ENCODE measurements at regions of chr11 and their contacts with region 1.

Region 1: GRCh38 chr11:21520244-21520643 is 672.6 kb upstream of the ANO5 start:
- DNase-seq: no peak
- H3K4me3 ChIP-seq: no peak overlapping the region
- H3K27ac ChIP-seq: no peak overlapping the region
- H3K4me1 ChIP-seq: no peaks in the 10 kb centered on the region
- H3K27me3 ChIP-seq: no peaks in the 10 kb centered on the region
- CTCF ChIP-seq: no peak
- EP300 ChIP-seq: no peak
- POLR2A ChIP-seq: no peak

Region 2: DNA sequence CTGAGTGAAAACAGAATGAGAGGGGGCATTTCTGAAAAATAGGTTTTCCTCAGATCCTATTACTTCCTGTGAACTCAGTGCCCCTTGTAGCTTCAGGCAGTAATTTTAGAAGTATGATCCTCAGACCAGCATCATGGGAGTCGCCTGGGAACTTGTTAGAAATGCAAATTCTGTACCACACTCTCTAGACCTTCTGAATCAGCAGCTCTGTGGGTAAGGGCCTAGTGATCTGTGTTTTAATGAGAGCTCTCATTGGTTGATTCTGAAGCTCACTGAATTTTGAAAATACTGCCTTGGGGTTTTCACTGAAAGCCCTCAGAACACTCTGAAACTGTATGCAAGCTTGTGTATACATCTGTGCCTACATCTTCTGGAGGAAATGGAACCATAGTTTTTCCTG is 25.5 kb after region 1 on chr11:
- in situ Hi-C with region 1: no loop called
- intact Hi-C with region 1: no loop called
- DNase-seq: no peak
- H3K4me3 ChIP-seq: no peak overlapping the region
- H3K27ac ChIP-seq: no peak overlapping the region
- H3K4me1 ChIP-seq: no peaks in the 10 kb centered on the region
- H3K27me3 ChIP-seq: no peaks in the 10 kb centered on the region
- CTCF ChIP-seq: no peak
- EP300 ChIP-seq: no peak
- POLR2A ChIP-seq: no peak

Region 3: DNA sequence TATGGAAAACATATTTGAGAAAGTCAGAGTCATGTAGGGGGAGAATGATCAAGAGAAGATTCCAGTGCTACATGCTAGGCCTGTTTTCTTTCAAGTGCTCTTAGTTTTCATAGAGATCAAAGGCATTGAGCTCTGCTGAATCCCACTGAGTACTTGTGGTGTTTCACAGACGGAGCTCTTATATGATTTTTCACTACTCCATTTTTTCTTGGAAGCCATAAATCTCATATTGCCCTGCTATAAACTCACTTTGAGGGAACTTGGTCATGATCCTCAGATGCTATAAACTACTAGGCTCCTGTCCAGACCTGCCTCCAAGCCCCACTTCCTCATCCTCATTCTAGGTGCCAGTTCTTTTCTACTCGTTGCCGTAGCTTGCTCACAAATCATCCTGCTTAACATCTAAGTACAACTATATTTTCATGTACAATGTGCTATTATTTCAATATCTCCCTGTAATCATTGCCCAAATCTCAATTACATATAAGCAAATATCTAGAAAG is 1520.8 kb after region 1 on chr11:
- in situ Hi-C with region 1: no loop called
- intact Hi-C with region 1: loop called (anchors 10 kb)
- DNase-seq: peak; percentile 37
- H3K4me3 ChIP-seq: no peak overlapping the region
- H3K27ac ChIP-seq: no peak overlapping the region
- H3K4me1 ChIP-seq: peaks cover 0 to 21% (median 6%) of the 10 kb centered on the region in 4 donors
- H3K27me3 ChIP-seq: no peaks in the 10 kb centered on the region
- CTCF ChIP-seq: no peak
- EP300 ChIP-seq: no peak
- POLR2A ChIP-seq: no peak

Measured in transverse colon (tissue), 4 donors.